HAP-1 (cell line): ENCODE measurements at regions of chr2 and their contacts with region 1.

Region 1: GRCh38 chr2:11129598-11130449 is 25.4 kb upstream of the SLC66A3 start:
- DNase-seq: peak; percentile 72 to 92
- H3K4me3 ChIP-seq: peak overlapping the region; percentile 19
- H3K4me1 ChIP-seq: peaks cover 7% of the 10 kb centered on the region
- H3K27me3 ChIP-seq: no peaks in the 10 kb centered on the region

Region 2: GRCh38 chr2:10873790-10874437 is 255.9 kb before region 1 on chr2:
- in situ Hi-C with region 1: no loop called
- DNase-seq: no peak
- H3K4me3 ChIP-seq: no peak overlapping the region
- H3K4me1 ChIP-seq: no peaks in the 10 kb centered on the region
- H3K27me3 ChIP-seq: no peaks in the 10 kb centered on the region

Region 3: GRCh38 chr2:11446733-11447248 is 317.0 kb after region 1 on chr2:
- in situ Hi-C with region 1: loop called (anchors 10 kb)
- DNase-seq: peak; percentile 48 to 74
- H3K4me3 ChIP-seq: no peak overlapping the region
- H3K4me1 ChIP-seq: no peaks in the 10 kb centered on the region
- H3K27me3 ChIP-seq: no peaks in the 10 kb centered on the region